ENCODE measurements at regions of chr21 and their contacts with region 1.

Region 1: GRCh38 chr21:36692835-36693488 is 6.0 kb upstream of the SIM2 start:
- DNase-seq: no peak
- ATAC-seq: no peak
- H3K4me3 ChIP-seq: no peak overlapping the region
- H3K4me3 Mint-ChIP-seq: peak overlapping the region in 4 of 10 donors; percentile 37 to 63 (median 43)
- H3K27ac ChIP-seq: no peak overlapping the region
- H3K27ac Mint-ChIP-seq: peak overlapping the region in 1 of 9 donors; percentile 33
- H3K4me1 ChIP-seq: peaks cover 0 to 7% of the 10 kb centered on the region in 2 donors
- H3K4me1 Mint-ChIP-seq: peaks cover 0 to 34% (median 24%) of the 10 kb centered on the region in 7 donors
- H3K27me3 ChIP-seq: peaks cover 0 to 45% of the 10 kb centered on the region in 2 donors
- H3K27me3 Mint-ChIP-seq: peaks cover 81 to 94% (median 84%) of the 10 kb centered on the region in 5 donors

Region 2: DNA sequence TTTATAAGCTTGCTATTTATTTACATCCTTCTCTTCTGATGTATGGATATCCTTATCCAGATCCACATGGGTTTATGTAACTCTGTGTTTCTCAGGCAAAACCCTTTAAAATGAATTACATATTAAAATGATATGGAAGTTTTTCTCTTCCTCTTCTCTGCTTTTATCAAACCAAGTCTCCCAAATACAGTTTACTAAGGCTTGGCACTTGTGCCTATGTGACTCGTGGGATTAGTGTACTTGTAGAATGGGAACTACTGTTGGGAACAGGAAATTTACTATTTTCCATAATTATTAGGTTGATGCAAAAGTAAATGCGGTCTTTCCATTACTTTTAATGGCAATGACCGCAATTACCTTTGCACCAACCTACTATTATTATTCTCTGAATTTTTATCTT is 20.8 kb after region 1 on chr21:
- CTCF ChIA-PET with region 1: no interaction called
- POLR2A ChIA-PET with region 1: no interaction called
- intact Hi-C with region 1: loop called in 1 of 2 experiments (anchors 2 kb)
- DNase-seq: no peak
- ATAC-seq: no peak
- H3K4me3 ChIP-seq: no peak overlapping the region
- H3K4me3 Mint-ChIP-seq: no peak overlapping the region
- H3K27ac ChIP-seq: no peak overlapping the region
- H3K27ac Mint-ChIP-seq: no peak overlapping the region
- H3K4me1 ChIP-seq: peaks cover 0 to under 1% of the 10 kb centered on the region in 2 donors
- H3K4me1 Mint-ChIP-seq: peaks cover 0 to 15% (median 10%) of the 10 kb centered on the region in 7 donors
- H3K27me3 ChIP-seq: peaks cover 0 to 15% of the 10 kb centered on the region in 2 donors
- H3K27me3 Mint-ChIP-seq: peaks cover 73 to 85% (median 81%) of the 10 kb centered on the region in 5 donors

Measured in naive thymus-derived CD4-positive, alpha-beta T cell (primary cell).